Activated B cell treated with CpG ODN at 0.5 μM for 24 hours (primary cell): ENCODE measurements at regions of chr2 and their contacts with region 1.

Region 1: GRCh38 chr2:201451292-201452057 is at the starts of genes STRADB and TRAK2:
- DNase-seq: peak; percentile 89
- ATAC-seq: peak; percentile 93
- H3K4me3 Mint-ChIP-seq: peak within 1 kb of the TSS; percentile 97
- H3K27ac Mint-ChIP-seq: peak within 1 kb of the TSS; percentile 95
- H3K4me1 Mint-ChIP-seq: peaks cover 51% of the 10 kb centered on the region
- H3K27me3 Mint-ChIP-seq: no peaks in the 10 kb centered on the region
- CTCF ChIP-seq: no peak
- total RNA-seq, gene STRADB: 17.8 and 23.3 TPM in 2 replicates
- total RNA-seq, gene TRAK2: 17.7 and 20.1 TPM in 2 replicates

Region 2: GRCh38 chr2:199911052-199911876 is 1540.2 kb before region 1 on chr2 and contains the start of gene C2orf69:
- CTCF ChIA-PET with region 1: no interaction called
- POLR2A ChIA-PET with region 1: no interaction called
- intact Hi-C with region 1: loop called (anchors 5 kb)
- DNase-seq: peak; percentile 86
- ATAC-seq: peak; percentile 83
- H3K4me3 Mint-ChIP-seq: peak within 1 kb of the TSS; percentile 94
- H3K27ac Mint-ChIP-seq: peak within 1 kb of the TSS; percentile 94
- H3K4me1 Mint-ChIP-seq: peaks cover 35% of the 10 kb centered on the region
- H3K27me3 Mint-ChIP-seq: no peaks in the 10 kb centered on the region
- CTCF ChIP-seq: no peak
- total RNA-seq, gene C2orf69: 12.1 and 12.6 TPM in 2 replicates

Region 3: DNA sequence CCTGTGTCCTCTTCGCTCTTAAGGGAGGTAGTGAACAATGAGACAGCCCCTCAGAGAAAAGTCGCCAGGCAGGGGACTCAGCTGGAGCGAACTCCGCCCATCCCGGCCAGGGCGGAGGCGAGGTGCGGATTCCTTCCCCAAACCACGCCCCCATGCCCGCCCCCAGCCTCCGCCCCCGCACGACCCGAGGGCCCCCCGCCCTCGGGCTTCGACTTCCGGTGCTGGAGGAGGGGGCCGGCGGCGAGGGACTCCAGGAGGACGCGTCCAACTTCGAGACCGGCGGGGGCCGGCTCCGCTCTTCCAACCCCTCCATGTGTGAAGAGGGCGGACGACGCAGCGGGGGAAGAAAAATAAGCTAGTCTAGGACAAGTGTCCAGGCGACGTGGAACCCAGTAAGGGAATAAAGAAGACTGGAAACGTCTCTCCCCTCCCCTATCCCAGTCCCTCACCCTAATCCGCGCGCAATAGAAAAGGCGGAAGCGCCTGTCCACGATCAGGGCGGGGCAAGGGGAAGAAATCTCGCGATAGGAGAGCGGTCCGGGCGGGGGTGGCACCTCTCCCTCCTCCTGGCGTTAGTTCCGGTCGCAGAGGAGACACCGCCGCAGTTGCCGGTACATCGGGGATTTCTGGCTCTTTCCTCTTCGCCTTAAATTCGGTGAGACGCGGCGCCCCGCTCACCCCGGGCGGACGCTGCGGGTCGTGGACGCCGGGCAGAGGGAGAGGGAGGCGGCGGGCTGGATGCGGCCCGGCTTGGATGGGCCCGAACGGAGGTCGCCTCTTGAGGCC is 639.9 kb before region 1 on chr2 and contains the start of gene BZW1:
- CTCF ChIA-PET with region 1: no interaction called
- POLR2A ChIA-PET with region 1: interaction called, 3 read pairs
- intact Hi-C with region 1: loop called (anchors 1 kb)
- DNase-seq: peak; percentile 94
- ATAC-seq: peak; percentile 80
- H3K4me3 Mint-ChIP-seq: peak within 1 kb of the TSS; percentile 98
- H3K27ac Mint-ChIP-seq: peak within 1 kb of the TSS; percentile 99
- H3K4me1 Mint-ChIP-seq: peaks cover 34% of the 10 kb centered on the region
- H3K27me3 Mint-ChIP-seq: no peaks in the 10 kb centered on the region
- CTCF ChIP-seq: no peak
- total RNA-seq, gene BZW1: 174 and 197 TPM in 2 replicates

Region 4: DNA sequence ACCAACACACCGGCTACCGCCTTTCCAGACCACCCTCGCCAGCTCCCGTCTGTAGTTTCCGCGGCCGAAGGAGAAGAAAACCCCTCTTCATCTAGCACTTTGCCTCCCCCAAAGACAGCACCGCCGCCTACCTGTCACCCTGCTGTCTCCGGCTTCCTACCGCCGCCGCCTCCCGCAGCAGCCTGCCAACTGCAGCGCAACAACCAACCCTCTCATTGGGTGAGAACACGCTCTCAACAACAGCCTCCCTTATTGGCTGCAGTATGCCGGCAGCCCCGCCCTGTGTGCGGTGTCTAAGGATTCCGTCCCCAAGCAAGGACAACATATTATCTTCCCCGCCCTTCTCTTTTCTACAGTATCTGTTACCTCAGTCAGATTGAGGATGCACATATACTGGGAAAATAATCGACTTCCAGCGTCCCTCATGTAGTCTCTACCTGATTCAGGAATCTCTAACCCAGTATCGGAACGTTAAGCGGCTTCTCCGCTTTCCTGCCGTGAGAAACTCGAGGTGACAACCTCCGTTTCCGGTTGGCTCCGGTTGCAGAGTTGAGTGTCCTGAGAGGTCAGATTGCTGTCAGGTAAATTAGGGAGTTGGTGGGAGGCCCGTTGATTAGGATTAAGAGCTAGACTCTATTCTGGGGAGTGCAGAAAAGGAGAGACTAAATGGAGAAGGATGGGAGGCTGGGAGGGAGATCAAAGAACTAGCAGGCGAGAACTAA is 379.8 kb before region 1 on chr2 and contains the starts of genes HYCC2 and NDUFB3:
- CTCF ChIA-PET with region 1: no interaction called
- POLR2A ChIA-PET with region 1: no interaction called
- intact Hi-C with region 1: loop called (anchors 1 kb)
- DNase-seq: peak; percentile 77
- ATAC-seq: peak; percentile 96
- H3K4me3 Mint-ChIP-seq: peak within 1 kb of the TSS; percentile 98
- H3K27ac Mint-ChIP-seq: peak within 1 kb of the TSS; percentile 96
- H3K4me1 Mint-ChIP-seq: peaks cover 50% of the 10 kb centered on the region
- H3K27me3 Mint-ChIP-seq: no peaks in the 10 kb centered on the region
- CTCF ChIP-seq: no peak
- total RNA-seq, gene HYCC2: 32.0 and 39.6 TPM in 2 replicates
- total RNA-seq, gene NDUFB3: 85.4 and 94.2 TPM in 2 replicates

Region 5: DNA sequence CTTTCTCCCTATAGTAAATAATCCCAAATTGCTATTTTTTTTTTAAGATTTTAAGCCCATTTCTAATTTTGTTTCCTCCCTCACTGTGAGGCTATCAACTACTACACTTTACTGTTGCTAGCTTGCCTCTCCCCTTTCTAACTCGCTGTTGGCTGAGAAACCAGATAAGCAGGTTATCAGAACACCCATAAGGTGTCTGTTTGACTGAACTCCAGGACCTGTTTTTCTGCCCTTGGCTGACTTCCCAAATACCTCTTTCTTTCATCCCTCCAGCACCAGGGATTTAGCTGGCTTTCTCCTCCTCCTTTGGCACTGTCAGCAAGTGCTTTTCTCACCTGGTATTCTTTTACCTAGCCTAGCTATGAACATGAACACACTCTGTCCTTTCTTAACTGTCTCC is 11.3 kb before region 1 on chr2:
- CTCF ChIA-PET with region 1: interaction called, 4 read pairs
- POLR2A ChIA-PET with region 1: interaction called, 14 read pairs
- intact Hi-C with region 1: no loop called
- DNase-seq: no peak
- ATAC-seq: no peak
- H3K4me3 Mint-ChIP-seq: no peak overlapping the region
- H3K27ac Mint-ChIP-seq: no peak overlapping the region
- H3K4me1 Mint-ChIP-seq: peaks cover 43% of the 10 kb centered on the region
- H3K27me3 Mint-ChIP-seq: no peaks in the 10 kb centered on the region
- CTCF ChIP-seq: no peak

Region 6: DNA sequence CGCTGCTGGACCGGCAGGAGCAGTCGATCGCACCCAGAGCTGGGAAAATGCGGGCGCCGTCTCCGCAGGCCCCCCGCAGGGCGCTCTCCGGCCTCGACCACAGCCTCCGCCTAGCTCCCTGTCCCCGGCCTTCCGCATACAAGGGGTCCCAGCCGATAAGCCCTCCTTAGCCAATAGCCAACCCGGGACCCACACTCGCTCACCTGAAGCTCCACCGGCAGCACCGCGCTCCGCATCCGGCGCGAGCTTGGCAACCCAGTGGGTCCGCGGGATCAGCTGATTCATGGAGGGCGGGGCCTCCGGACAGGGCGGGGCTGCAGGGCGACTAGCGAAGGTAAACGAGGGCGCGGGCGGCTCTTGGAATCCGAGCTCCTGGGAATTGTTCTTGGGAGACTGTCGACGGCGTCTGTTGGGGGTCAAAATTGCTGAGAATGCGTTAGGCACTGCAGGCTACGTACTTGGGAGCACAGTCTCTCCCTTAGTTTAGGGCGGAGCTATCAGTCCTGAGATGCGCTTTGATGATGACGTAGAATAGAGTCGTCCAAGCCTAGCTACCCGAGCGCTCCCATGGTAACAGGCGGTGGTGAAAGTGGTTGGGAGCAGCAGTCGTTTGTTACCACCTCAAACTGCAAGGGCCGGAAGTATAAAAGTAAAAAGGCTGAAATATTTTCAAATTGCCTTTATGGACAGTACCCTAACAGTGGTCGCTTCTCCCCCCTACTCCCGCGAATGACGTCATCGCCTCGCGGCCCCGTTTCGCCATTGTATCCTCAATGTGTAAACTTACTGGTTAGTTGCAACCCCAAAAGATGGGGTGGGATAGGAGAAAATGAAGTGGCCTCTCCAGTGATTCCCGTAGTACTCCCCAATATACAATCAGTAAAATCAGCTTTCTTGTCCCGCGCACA is 329.5 kb after region 1 on chr2 and contains the start of gene ALS2:
- CTCF ChIA-PET with region 1: no interaction called
- POLR2A ChIA-PET with region 1: interaction called, 12 read pairs
- intact Hi-C with region 1: loop called (anchors 1 kb)
- DNase-seq: peak; percentile 95
- ATAC-seq: peak; percentile 90
- H3K4me3 Mint-ChIP-seq: peak within 1 kb of the TSS; percentile 96
- H3K27ac Mint-ChIP-seq: peak within 1 kb of the TSS; percentile 95
- H3K4me1 Mint-ChIP-seq: peaks cover 17% of the 10 kb centered on the region
- H3K27me3 Mint-ChIP-seq: peaks cover 8% of the 10 kb centered on the region
- CTCF ChIP-seq: no peak
- total RNA-seq, gene ALS2: 11.6 and 14.2 TPM in 2 replicates

Region 7: DNA sequence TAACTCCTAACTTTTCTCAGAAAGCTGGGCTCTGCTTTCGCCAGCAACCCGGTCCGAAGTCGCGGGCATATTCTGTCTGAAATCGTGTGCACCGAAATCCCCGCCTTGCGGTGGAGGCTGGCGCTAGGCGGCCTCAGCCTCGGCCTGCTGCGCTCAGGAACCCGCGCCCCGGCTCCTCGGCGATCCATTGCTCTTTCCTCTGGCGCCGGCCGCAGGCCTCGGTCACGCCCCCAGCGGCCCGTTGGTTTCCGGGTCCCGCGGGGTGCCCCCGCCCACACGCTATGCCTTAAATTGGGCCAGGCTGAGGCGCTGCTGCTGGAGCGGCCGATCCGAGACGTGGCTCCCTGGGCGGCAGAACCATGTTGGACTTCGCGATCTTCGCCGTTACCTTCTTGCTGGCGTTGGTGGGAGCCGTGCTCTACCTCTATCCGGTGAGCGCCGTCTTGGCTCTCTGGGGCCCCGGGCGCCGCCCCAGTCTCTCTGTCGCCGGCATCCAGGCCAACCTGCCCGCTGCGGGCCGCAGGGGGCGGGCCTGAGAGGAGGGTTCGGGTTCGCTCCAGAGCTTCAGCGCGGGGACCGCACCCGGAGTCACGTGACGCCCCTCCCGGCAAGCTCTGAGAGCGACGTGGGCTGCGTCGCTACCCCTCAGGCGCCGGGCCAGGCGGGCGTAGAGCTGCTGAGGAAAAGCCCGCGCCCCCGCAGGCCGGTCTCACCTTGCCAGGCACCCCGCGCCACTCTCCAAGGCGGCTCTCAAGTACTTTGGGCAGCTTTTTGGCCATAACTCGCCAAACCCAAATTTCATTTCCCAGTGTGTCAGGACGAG is 1787.4 kb after region 1 on chr2 and contains the start of gene CYP20A1:
- CTCF ChIA-PET with region 1: no interaction called
- POLR2A ChIA-PET with region 1: interaction called, 3 read pairs
- intact Hi-C with region 1: loop called (anchors 2 kb)
- DNase-seq: peak; percentile 98
- ATAC-seq: peak; percentile 85
- H3K4me3 Mint-ChIP-seq: peak within 1 kb of the TSS; percentile 96
- H3K27ac Mint-ChIP-seq: peak within 1 kb of the TSS; percentile 95
- H3K4me1 Mint-ChIP-seq: peaks cover 32% of the 10 kb centered on the region
- H3K27me3 Mint-ChIP-seq: no peaks in the 10 kb centered on the region
- CTCF ChIP-seq: no peak
- total RNA-seq, gene CYP20A1: 24.0 and 32.2 TPM in 2 replicates